ENCODE measurements at regions of chr5 and their contacts with region 1.

Region 1: GRCh38 chr5:125639858-125640257 is 783.4 kb upstream of the GRAMD2B start:
- DNase-seq: no peak
- ATAC-seq: no peak

Region 2: DNA sequence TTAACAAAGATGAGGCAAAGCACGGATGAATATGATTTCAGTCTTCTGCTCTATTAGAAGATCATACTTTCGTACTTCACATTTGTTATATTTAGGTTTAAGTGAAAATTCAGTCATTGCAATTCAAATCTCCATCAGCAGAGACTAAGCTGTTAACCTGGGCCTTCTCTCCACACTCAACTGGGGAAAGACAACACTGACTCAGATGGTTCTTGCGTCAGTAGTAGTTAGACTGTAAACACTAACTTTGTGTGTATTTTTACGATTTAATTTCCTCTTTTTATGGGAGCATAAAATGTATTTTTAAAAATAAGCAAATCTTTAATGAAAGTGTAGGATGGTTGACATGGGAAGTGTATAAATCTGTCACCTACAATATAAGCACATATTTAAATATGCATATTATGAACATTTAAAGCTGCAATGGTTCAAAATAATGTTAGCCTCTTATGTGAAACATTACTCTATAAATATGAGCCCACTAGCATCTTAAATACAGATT is 850.7 kb before region 1 on chr5:
- intact Hi-C with region 1: loop called (anchors 5 kb)
- DNase-seq: no peak
- ATAC-seq: no peak